Heart right ventricle (tissue), 16 donors: ENCODE measurements at regions of chr19 and their contacts with region 1.

Region 1: DNA sequence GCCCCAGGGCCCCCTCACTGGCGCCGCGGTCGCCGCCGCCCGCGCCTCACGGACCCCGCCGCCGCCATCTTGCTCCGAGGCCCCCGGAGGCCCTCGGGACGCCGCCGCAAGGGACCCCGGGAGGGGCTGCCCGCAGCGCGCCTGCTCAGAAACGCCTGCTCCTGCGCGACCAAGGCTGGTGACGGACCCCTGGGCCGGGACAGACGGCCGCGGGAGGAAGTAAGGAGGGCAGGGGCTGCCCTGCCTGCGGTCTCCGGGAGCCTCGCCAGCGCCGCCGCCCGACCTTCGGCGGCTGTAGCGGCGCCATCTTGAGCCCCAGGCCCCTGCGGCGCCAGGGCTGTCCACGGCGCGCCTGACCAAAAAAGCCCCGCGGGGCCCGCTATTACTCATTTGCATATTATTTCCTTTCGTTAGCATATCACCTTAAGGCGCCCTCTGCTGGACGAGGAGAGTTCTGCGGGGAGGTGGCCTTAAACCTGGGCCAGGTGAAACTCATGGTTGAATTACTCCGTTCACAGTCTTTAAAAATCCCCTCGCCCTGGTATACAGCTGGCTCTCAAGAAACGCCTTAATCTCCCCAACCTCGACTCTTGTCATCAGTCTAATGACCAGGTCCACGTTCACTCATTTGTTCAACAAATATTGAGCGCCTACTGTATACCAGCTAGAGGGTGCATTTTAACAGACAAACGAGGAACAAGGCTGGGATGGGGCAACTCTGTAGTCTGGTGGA is at the start of gene REXO1:
- DNase-seq: peak; percentile 96
- ATAC-seq: peak; percentile 80 to 90 (median 86)
- H3K4me3 ChIP-seq: peak within 1 kb of the TSS; percentile 93 to 100 (median 98)
- H3K27ac ChIP-seq: peak within 1 kb of the TSS; percentile 98 to 100 (median 99)
- H3K4me1 ChIP-seq: peaks cover 16 to 68% (median 48%) of the 10 kb centered on the region in 9 donors
- H3K27me3 ChIP-seq: no peaks in the 10 kb centered on the region
- CTCF ChIP-seq: peak; percentile 82 to 98 (median 94)
- total RNA-seq, gene REXO1: 13.1 to 20.1 (median 16.5) TPM

Region 2: GRCh38 chr19:1608359-1609102 is 240.0 kb before region 1 on chr19:
- intact Hi-C with region 1: no loop called
- DNase-seq: no peak
- ATAC-seq: no peak
- H3K4me3 ChIP-seq: peak overlapping the region in 1 of 10 donors; percentile 31
- H3K27ac ChIP-seq: peak overlapping the region in 1 of 10 donors; percentile 46
- H3K4me1 ChIP-seq: peaks cover 5 to 38% (median 22%) of the 10 kb centered on the region in 9 donors
- H3K27me3 ChIP-seq: no peaks in the 10 kb centered on the region
- CTCF ChIP-seq: no peak

Region 3: DNA sequence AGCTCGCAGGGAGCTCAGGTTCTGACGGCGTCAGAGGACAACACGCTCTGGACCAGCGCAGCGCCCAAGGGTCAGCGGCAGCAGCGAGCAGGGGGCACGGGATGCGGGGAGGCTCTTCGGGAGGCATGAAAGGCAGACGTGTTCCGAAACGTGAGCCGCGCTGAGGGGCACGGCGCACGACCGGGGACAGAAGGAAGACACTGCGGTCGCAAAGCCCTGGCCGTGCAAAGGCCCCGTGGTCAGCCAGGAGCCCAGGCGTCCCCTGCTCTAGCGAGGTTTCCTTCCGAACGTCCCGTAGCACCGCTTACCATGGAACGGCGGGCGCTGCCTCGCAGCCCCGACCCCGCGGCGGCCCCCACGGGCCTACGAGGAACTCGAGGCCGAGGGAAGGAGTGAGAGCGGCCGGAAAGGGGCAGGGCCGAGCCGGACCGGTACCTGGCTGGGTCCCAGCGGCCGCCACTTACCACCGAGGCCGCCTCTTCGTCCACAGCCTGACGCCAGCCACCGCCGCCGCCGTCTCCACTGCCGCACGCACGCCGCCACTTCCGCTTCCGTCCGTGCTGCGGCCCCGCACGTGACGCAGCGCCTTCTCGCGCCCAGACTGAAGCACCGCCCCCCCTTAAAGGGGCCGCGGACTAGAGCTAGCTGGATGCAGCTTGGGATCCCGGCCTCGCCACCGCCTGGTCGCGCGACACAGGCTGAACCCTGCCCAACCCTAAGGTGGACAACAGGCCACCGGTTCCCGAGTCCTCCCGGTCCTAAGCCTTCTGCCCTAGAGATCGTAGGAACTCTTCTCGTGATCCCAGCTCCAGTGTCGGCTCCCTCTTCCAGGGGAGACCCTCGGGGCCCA is 27.3 kb after region 1 on chr19:
- intact Hi-C with region 1: loop called in 1 of 10 experiments (anchors 2 kb)
- DNase-seq: peak; percentile 91 to 92
- ATAC-seq: peak; percentile 87 to 96 (median 94)
- H3K4me3 ChIP-seq: peak overlapping the region; percentile 77 to 100 (median 92)
- H3K27ac ChIP-seq: peak overlapping the region; percentile 81 to 99 (median 95)
- H3K4me1 ChIP-seq: peaks cover 26 to 67% (median 59%) of the 10 kb centered on the region in 9 donors
- H3K27me3 ChIP-seq: no peaks in the 10 kb centered on the region
- CTCF ChIP-seq: peak in 2 of 9 donors; percentile 15 to 23

Region 4: GRCh38 chr19:1929021-1929742 is 80.6 kb after region 1 on chr19:
- intact Hi-C with region 1: no loop called
- DNase-seq: peak; percentile 69 to 83
- ATAC-seq: peak; percentile 87 to 95 (median 94)
- H3K4me3 ChIP-seq: peak overlapping the region in 9 of 10 donors; percentile 12 to 56 (median 45)
- H3K27ac ChIP-seq: peak overlapping the region in 1 of 10 donors; percentile 24
- H3K4me1 ChIP-seq: peaks cover 5 to 14% (median 12%) of the 10 kb centered on the region in 9 donors
- H3K27me3 ChIP-seq: no peaks in the 10 kb centered on the region
- CTCF ChIP-seq: peak; percentile 88 to 94 (median 91)